Dorsolateral prefrontal cortex (tissue), 120 donors: ENCODE measurements at regions of chr9 and their contacts with region 1.

Region 1: DNA sequence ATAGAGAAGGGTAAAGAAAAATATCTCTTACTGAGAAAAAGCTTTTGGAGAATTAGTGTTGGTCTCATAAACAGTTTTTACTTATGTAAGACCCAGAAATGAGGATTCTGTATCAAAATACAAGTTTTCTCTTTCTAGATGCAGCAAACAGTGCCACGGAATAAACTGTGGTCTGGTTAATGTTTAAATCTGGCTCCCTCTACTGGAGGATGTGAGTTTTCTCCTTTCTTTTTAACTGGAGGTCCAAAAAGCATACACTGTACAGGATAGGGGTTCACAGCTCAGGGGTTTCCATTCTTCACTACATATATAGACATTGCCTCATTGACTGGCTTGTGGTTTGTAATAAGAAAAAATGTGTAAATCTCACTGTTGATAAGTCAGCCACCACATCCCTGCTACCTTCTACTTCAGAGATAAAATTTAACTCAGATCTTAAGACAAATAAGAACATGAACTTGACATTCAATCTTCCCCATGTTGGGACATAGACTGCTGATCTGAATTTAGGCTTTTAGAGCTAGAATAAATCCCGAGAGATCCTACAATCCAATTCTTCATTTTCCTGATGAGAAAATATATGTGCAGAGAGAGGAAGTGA is 98.9 kb downstream of the CFAP95 start:
- DNase-seq: peak in 1 of 10 donors; percentile 14
- H3K4me3 ChIP-seq: no peak overlapping the region
- H3K27ac ChIP-seq: no peak overlapping the region
- H3K27me3 ChIP-seq: peaks cover 0 to 8% (median 0%) of the 10 kb centered on the region in 45 donors
- CTCF ChIP-seq: peak; percentile 62 to 90 (median 81)

Region 2: DNA sequence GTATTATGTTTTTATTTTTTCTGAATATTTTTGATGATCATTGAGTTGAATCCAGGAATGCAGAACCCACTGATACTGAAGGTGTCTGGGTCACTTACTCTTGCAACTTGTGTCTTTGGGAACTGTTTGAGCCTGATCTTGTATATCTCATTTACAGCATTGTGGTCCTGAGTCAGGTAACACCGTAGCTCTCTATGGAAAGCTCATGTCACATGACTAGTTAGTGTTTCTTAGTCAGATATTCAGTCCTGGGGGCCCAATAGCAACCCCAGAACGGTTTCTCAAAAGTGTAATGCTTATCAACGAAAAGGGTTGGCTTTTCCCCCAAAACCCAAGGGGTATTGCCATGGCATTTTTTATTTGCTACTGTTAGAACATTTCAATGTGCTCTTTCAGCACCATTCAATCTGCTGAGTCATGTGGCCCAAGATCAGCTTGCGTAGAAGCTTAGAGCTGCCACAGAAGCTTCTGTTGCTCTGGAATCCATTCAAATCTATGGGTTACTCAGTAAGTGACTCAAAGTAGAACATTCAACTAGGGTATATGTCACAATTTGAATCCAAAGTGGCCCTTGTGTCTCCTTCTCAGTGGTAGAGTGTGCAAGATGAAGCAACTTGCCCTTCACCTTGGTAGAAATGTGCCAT is 147.7 kb before region 1 on chr9:
- intact Hi-C with region 1: loop called (anchors 10 kb)
- DNase-seq: no peak
- H3K4me3 ChIP-seq: no peak overlapping the region
- H3K27ac ChIP-seq: no peak overlapping the region
- H3K27me3 ChIP-seq: no peaks in the 10 kb centered on the region
- CTCF ChIP-seq: no peak

Region 3: GRCh38 chr9:69847491-69847890 is 72.1 kb before region 1 on chr9:
- intact Hi-C with region 1: no loop called
- DNase-seq: no peak
- H3K4me3 ChIP-seq: no peak overlapping the region
- H3K27ac ChIP-seq: no peak overlapping the region
- H3K27me3 ChIP-seq: peaks cover 0 to 9% (median 0%) of the 10 kb centered on the region in 45 donors
- CTCF ChIP-seq: no peak

Region 4: GRCh38 chr9:69877854-69878514 is 41.6 kb before region 1 on chr9:
- intact Hi-C with region 1: no loop called
- DNase-seq: no peak
- H3K4me3 ChIP-seq: no peak overlapping the region
- H3K27ac ChIP-seq: no peak overlapping the region
- H3K27me3 ChIP-seq: no peaks in the 10 kb centered on the region
- CTCF ChIP-seq: peak; percentile 39 to 84 (median 67)